Heart left ventricle (tissue), 16 donors: ENCODE measurements at regions of chr6 and their contacts with region 1.

Region 1: DNA sequence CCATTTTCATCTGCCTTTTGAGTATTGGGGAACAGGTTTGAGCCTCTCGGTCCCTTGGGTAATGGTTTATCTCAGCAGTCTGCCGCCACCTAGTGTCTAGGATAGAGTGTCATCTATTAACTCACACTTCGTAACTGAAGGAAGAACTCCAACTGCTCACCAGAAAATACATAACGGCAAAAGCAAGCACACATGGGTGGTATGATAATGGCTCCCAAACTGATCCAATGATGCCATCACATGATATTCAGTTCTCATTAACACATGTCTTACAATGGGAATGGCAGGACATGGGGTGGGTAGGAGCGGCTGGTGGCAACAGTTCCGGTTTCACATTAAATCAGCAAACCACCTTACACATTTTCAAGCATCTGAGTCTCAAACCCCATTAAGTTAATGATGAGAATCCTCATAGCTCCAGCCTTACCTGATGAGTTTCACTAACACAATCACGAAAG is 110.7 kb upstream of the PHACTR1 start:
- DNase-seq: peak in 4 of 5 donors; percentile 30 to 40 (median 35)
- ATAC-seq: peak; percentile 63 to 83 (median 77)
- H3K4me3 ChIP-seq: no peak overlapping the region
- H3K27ac ChIP-seq: no peak overlapping the region
- H3K4me1 ChIP-seq: peaks cover 0 to 25% (median 3%) of the 10 kb centered on the region in 12 donors
- H3K27me3 ChIP-seq: no peaks in the 10 kb centered on the region
- CTCF ChIP-seq: peak; percentile 43 to 77 (median 65)
- POLR2A ChIP-seq: no peak

Region 2: DNA sequence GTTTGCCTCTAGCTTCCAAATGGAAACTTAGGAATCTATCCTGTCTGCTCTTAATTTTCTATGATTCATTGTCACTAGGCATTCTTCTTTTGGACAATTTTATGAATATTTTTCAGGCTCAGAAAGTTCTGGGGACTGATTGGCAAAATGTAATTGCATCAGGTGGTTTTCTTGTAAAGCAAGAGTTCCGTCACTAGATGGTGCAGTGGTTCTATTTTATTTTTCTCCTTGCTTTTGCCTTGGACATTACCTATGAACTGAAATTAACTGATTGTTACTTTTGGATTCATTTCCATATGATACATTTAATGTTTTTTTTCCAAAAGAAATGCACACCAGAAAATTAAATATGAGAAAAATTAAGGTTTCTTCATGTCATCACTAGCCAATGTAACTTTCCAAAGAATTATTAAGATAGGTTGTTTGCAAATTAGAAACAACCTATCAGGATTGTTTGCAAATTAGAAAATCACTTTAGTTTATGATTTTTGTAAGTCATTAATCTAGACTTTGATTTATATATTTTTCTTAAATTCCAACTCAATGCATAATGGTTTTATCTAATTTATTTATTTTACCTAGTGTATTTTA is 1020.4 kb before region 1 on chr6:
- intact Hi-C with region 1: loop called (anchors 2 to 10 kb)
- DNase-seq: no peak
- ATAC-seq: peak in 1 of 4 donors; percentile 41
- H3K4me3 ChIP-seq: no peak overlapping the region
- H3K27ac ChIP-seq: no peak overlapping the region
- H3K4me1 ChIP-seq: peaks cover 0 to 5% (median 0%) of the 10 kb centered on the region in 12 donors
- H3K27me3 ChIP-seq: no peaks in the 10 kb centered on the region
- CTCF ChIP-seq: peak; percentile 47 to 75 (median 70)
- POLR2A ChIP-seq: no peak

Region 3: GRCh38 chr6:11595903-11596302 is 1010.0 kb before region 1 on chr6:
- intact Hi-C with region 1: loop called in 1 of 10 experiments (anchors 10 kb)
- DNase-seq: no peak
- ATAC-seq: no peak
- H3K4me3 ChIP-seq: no peak overlapping the region
- H3K27ac ChIP-seq: no peak overlapping the region
- H3K4me1 ChIP-seq: peaks cover 0 to 6% (median 0%) of the 10 kb centered on the region in 12 donors
- H3K27me3 ChIP-seq: no peaks in the 10 kb centered on the region
- CTCF ChIP-seq: peak in 4 of 12 donors; percentile 7 to 39 (median 21)
- POLR2A ChIP-seq: no peak

Region 4: DNA sequence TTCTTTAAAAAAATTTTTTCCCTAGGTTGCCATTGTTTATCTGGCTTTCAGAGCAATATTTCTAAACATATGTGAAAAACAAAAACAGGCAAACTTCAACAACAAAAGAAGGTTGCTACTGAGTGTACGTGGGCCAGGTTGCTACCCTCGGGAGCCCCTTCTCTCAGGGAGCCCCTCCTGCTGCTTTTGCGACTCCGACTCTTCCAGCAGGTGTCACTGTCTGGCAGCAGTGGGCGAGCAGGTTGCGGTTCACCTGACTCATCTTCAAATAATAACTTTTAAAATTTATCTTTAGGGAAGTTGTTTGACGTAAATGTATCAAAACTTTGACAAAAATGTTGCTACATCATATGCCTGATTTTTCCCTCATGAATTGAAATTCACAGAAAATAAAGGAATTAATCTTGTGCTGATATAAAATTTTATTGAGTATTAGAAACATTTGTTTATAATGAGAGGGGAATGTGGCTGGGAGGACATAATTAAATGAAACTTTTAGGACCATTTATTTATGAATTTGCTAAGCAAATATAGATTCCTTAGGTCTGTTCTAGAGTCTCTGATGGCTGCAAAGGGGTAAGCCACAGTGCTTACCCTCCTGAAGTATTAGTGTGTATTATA is 455.0 kb before region 1 on chr6:
- intact Hi-C with region 1: loop called in 4 of 10 experiments (anchors 5 to 10 kb)
- DNase-seq: no peak
- ATAC-seq: no peak
- H3K4me3 ChIP-seq: no peak overlapping the region
- H3K27ac ChIP-seq: no peak overlapping the region
- H3K4me1 ChIP-seq: peaks cover 0 to 6% (median 0%) of the 10 kb centered on the region in 12 donors
- H3K27me3 ChIP-seq: no peaks in the 10 kb centered on the region
- CTCF ChIP-seq: peak in 8 of 12 donors; percentile 23 to 40 (median 31)
- POLR2A ChIP-seq: no peak

Region 5: GRCh38 chr6:12395898-12396297 is 210.0 kb before region 1 on chr6:
- intact Hi-C with region 1: loop called in 6 of 10 experiments (anchors 5 to 10 kb)
- DNase-seq: no peak
- ATAC-seq: no peak
- H3K4me3 ChIP-seq: no peak overlapping the region
- H3K27ac ChIP-seq: no peak overlapping the region
- H3K4me1 ChIP-seq: peaks cover 0 to 12% (median 1%) of the 10 kb centered on the region in 12 donors
- H3K27me3 ChIP-seq: no peaks in the 10 kb centered on the region
- CTCF ChIP-seq: peak in 7 of 12 donors; percentile 17 to 46 (median 28)
- POLR2A ChIP-seq: no peak

Region 6: DNA sequence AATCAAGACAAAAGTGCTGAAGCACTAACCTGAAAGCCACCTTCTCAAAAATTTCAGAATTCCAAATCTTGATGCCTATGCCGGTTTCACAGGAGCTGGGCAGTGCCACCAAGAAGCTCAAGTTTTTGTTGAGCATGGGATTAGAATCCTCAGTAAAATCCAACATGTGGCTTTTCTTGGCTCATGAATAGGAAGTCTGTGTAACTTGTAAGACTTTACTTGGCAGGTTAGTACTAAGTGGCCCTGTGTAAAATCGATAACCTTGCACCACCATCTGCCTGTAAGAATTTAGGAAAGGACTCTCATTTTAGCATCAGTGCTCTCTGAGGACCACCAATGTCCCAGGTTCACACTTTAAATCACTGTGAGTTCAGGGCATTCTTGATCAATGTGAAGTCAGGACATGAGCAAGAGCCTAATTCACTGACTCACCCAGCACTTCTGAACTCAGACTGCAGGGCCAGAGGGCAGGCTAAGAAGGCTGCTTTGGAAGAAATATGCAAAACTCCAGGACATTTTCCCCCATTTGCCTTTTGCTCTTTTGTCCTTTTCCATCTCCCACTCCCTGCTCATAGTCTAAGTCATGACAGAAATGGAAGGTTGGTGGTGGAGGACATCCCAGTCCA is 202.6 kb before region 1 on chr6:
- intact Hi-C with region 1: loop called in 6 of 10 experiments (anchors 5 to 10 kb)
- DNase-seq: no peak
- ATAC-seq: peak in 3 of 4 donors; percentile 30 to 78 (median 56)
- H3K4me3 ChIP-seq: no peak overlapping the region
- H3K27ac ChIP-seq: peak overlapping the region in 2 of 12 donors; percentile 32 to 47
- H3K4me1 ChIP-seq: peaks cover 0 to 33% (median 6%) of the 10 kb centered on the region in 12 donors
- H3K27me3 ChIP-seq: no peaks in the 10 kb centered on the region
- CTCF ChIP-seq: no peak
- POLR2A ChIP-seq: no peak